ENCODE measurements at regions of chr3 and their contacts with region 1.

Region 1: DNA sequence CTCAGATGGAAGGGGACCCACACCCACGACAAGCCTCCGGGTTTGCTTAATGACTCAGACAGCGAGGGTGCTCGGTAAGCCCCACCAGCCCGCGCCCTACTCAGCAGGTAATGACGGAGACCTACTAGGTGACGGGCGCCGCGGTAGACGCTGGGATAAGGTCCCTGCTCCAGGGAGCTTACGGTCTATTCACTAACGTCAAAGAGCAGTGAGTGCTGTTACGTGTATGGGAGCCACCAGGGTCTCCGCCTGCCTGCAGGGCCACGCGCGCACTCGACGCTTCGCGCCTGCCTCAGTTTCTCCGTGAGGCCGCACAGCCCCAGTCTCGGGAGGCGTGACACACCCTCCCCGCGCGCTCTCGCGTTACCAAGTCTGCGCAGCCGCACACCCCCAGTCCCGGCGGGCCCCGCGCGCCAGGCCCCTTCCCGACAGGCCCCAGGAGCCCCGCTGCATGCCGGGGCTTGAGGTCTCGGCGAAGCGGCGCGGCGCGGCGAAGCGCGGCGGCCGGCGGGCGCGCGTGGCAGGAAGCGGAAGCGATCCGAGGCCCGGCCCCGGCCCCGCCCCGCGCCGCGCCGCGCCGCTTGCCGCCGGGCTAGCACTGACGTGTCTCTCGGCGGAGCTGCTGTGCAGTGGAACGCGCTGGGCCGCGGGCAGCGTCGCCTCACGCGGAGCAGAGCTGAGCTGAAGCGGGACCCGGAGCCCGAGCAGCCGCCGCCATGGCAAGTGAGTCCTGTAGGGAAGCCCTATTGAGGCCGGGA is at the start of gene SEC61A1:
- DNase-seq: peak; percentile 87 to 92
- ATAC-seq: peak; percentile 75
- H3K4me3 ChIP-seq: peak within 1 kb of the TSS; percentile 83 to 96 (median 94)
- H3K27ac ChIP-seq: peak within 1 kb of the TSS; percentile 86 to 99 (median 95)
- H3K4me1 ChIP-seq: peaks cover 34 to 40% of the 10 kb centered on the region in 2 donors
- H3K27me3 ChIP-seq: no peaks in the 10 kb centered on the region
- CTCF ChIP-seq: peak in 1 of 5 experiments; percentile 6
- POLR2A ChIP-seq: peak; percentile 88 to 95
- total RNA-seq, gene SEC61A1: 81.6 to 135 (median 106) TPM

Region 2: DNA sequence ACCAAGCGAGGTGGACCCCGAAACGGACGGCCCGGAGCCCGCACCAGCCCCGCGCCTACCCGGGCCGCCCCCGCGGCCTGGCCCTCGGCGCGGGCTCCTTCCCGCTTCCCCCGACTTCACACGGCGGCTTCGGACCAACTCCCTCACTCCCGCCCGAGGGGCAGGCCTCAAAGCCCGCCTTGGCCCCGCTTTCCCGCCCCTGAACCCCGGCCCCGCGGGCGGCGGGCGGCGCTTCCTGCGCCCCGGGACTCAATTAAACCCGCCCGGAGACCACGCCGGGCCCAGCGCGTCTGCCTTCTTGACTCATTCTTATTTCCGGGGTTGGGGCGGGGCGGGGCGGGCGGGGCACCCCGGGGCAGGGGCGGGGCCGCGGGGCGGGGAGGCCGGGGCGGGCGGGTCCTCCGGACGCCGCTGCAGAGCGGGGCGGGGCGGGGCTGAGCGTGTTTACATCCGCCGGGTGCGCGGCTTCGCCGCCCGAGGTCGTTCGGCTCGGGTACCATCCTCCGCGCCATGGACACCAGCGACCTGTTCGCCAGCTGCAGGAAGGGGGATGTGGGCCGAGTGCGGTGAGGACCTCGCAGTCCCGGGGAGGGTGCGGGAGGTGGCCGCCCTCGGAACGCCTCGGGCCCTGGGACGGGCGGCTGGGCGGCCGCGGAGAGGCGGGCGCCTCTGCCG is 379.4 kb before region 1 on chr3 and contains the start of gene ABTB1:
- in situ Hi-C with region 1: no loop called
- intact Hi-C with region 1: loop called (anchors 5 kb)
- DNase-seq: peak; percentile 75 to 81
- ATAC-seq: peak; percentile 84 to 87
- H3K4me3 ChIP-seq: peak within 1 kb of the TSS; percentile 63 to 91 (median 80)
- H3K27ac ChIP-seq: peak within 1 kb of the TSS; percentile 85 to 98 (median 90)
- H3K4me1 ChIP-seq: peaks cover 11 to 19% of the 10 kb centered on the region in 2 donors
- H3K27me3 ChIP-seq: no peaks in the 10 kb centered on the region
- CTCF ChIP-seq: no peak
- POLR2A ChIP-seq: peak; percentile 91 to 93
- total RNA-seq, gene ABTB1: 22.9 to 37.5 (median 30.1) TPM

Region 3: GRCh38 chr3:127915115-127915936 is 136.7 kb before region 1 on chr3 and contains the start of gene KBTBD12:
- in situ Hi-C with region 1: no loop called
- intact Hi-C with region 1: loop called (anchors 2 kb)
- DNase-seq: peak; percentile 87 to 96
- ATAC-seq: peak; percentile 84 to 87
- H3K4me3 ChIP-seq: peak within 1 kb of the TSS; percentile 66 to 80 (median 69)
- H3K27ac ChIP-seq: peak within 1 kb of the TSS; percentile 95 to 98 (median 98)
- H3K4me1 ChIP-seq: peaks cover 41 to 43% of the 10 kb centered on the region in 2 donors
- H3K27me3 ChIP-seq: no peaks in the 10 kb centered on the region
- CTCF ChIP-seq: no peak
- POLR2A ChIP-seq: peak; percentile 96
- total RNA-seq, gene KBTBD12: 16.0 to 28.7 (median 22.1) TPM

Region 4: DNA sequence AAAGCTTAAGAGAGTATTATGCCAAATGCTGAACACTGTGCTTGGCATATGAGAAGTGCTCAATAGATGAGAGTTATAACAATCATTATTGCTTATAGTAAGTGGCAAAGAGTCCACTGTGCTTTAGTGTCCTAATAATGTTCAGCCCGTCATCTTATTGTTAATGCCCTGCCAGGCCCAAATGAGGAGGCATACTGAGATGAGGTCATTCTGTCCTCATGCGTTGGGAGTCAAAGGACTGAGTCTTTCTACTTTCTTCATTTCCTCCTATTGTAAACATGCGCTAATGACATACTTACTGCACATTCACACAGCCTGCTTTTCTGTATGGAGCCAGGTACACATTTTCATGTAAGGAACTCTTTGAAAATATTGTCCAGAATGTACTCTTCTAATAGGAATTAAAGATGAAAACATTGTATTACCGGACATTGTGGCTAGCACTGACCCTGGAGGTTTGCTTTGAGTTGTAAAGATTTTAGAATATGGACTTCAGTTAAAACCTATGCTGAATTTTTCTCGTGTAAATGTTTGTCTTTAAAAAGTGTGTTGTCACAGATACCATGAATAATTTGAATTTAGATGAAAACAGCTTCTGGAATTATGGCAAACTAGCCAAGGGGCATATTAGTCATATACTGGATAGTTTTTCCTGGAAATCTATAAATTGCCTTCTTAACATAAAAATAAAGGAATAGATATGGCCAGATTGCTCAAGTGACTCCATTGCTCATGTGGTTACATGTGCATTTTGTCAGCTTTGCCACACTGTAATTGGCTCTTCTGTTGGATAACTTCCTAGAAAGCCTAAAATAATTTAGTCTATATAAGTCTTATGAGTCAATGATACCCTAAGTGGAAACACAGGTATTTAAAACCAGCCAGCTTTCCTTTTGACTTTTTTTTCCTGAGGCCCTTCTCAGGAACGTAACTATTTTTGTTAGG is 98.7 kb before region 1 on chr3:
- in situ Hi-C with region 1: no loop called
- intact Hi-C with region 1: loop called (anchors 5 kb)
- DNase-seq: no peak
- ATAC-seq: peak; percentile 76 to 88
- H3K4me3 ChIP-seq: no peak overlapping the region
- H3K27ac ChIP-seq: peak overlapping the region; percentile 85 to 95 (median 90)
- H3K4me1 ChIP-seq: peaks cover 54 to 64% of the 10 kb centered on the region in 2 donors
- H3K27me3 ChIP-seq: no peaks in the 10 kb centered on the region
- CTCF ChIP-seq: no peak
- POLR2A ChIP-seq: no peak

Region 5: DNA sequence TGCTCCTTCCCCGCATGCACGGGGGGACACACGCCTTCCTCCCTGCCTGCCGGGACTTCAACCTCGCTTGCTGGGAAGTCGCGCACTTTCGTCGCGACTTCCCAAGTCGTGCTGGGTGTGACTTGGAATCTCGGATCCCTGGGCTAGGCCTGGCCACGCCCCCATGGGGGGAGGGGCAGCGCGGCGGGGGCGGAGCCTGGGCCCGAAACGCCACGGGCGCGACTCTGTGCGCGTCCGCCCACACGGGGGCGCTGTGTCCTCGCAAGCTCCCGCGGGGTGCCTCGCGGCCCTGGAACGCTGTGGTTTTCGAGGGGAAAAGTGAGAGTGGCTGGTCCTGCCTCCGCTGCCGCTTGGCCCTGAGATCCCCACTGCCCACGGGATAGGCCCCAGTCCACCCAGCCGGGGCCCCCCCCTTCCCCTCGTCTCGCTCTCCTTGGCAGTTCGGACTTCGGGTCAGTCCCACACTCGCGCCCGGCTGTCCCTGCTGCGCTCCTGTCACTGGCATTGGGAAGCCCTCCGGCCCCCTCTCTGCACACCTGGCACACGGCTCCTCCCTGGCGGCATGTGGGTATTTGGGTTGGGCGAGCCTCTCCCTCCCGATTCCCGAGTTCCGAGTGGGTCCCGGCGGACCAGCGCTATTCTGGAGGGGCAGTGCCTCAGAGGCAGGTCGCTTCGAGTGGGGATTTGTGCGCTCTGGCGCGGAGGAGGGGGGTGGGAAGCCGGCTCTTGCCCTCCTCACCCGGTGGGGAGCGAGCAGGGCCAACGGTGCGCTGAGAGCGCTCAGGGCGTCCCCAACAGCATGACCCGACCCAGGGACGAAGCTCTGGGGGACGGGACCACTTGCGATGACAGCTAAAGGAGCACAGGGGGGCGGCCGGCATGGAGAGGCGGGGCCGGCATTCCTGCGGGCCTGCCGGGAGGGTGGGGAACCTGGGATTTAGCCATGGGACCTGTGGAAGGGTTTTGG is 23.8 kb after region 1 on chr3:
- in situ Hi-C with region 1: no loop called
- intact Hi-C with region 1: loop called (anchors 2 kb)
- DNase-seq: peak; percentile 61 to 75
- ATAC-seq: peak; percentile 80 to 86
- H3K4me3 ChIP-seq: peak overlapping the region; percentile 58 to 79 (median 60)
- H3K27ac ChIP-seq: peak overlapping the region; percentile 45 to 60 (median 50)
- H3K4me1 ChIP-seq: peaks cover 14 to 28% of the 10 kb centered on the region in 2 donors
- H3K27me3 ChIP-seq: no peaks in the 10 kb centered on the region
- CTCF ChIP-seq: peak; percentile 89 to 97 (median 92)
- POLR2A ChIP-seq: peak in 1 of 2 donors; percentile 14

Region 6: DNA sequence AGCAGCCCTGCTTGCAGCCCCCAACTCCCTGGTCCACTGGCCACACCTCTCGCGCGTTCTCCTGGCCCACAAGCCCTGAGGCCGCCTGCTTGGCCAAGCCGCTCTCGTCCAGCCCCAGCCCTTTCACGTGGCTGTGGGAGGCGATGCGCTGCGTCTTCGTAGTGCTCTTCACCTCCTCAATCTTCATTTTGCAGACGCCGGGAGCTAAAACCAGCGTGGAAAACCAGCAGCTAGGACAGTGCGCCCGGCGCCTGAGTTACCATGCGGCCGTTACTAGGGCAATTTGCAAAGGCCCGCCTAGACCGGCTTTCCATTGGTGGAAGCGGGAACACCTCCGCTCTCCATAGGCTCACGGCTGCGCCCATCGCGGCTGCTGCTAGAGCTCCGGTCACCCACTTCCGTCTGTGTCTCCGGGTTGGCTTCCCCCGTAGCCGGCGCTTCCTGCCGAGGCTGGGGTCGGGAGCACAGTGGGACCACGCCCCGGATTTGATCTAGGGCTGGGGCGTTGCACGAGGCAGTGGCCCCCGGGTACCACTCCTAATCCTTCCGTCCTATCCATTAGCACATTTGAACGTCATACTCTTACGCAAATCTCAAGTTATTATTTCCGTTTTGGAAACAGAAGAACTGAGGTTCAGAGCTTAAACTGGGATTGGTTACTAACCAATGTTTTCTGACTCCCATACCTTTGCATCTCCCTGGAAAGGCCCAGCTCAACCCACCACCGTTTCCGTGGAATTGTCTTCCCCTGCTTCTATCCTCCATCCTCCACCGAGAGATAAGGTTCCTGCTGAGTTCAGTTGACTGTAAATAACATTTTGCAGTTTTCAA is 71.7 kb after region 1 on chr3 and contains the start of gene RUVBL1:
- in situ Hi-C with region 1: no loop called
- intact Hi-C with region 1: loop called (anchors 2 kb)
- DNase-seq: peak; percentile 95 to 97
- ATAC-seq: peak; percentile 99 to 100
- H3K4me3 ChIP-seq: peak within 1 kb of the TSS; percentile 87 to 99 (median 93)
- H3K27ac ChIP-seq: peak within 1 kb of the TSS; percentile 67 to 83 (median 76)
- H3K4me1 ChIP-seq: peaks cover 11 to 14% of the 10 kb centered on the region in 2 donors
- H3K27me3 ChIP-seq: no peaks in the 10 kb centered on the region
- CTCF ChIP-seq: no peak
- POLR2A ChIP-seq: peak; percentile 39 to 48
- total RNA-seq, gene RUVBL1: 12.1 to 26.3 (median 21.4) TPM

Measured in gastrocnemius medialis (tissue), 4 donors.